Tibial artery (tissue), 4 donors: ENCODE measurements at regions of chr7 and their contacts with region 1.

Region 1: GRCh38 chr7:518630-519483 is 789 bp downstream of the PDGFA start:
- DNase-seq: peak; percentile 80 to 93
- H3K4me3 ChIP-seq: peak overlapping the region; percentile 89 to 96
- H3K27ac ChIP-seq: peak overlapping the region; percentile 96 to 99
- H3K4me1 ChIP-seq: peaks cover 0 to 71% (median 57%) of the 10 kb centered on the region in 4 donors
- H3K27me3 ChIP-seq: no peaks in the 10 kb centered on the region
- CTCF ChIP-seq: peak in 1 of 2 experiments; percentile 35

Region 2: DNA sequence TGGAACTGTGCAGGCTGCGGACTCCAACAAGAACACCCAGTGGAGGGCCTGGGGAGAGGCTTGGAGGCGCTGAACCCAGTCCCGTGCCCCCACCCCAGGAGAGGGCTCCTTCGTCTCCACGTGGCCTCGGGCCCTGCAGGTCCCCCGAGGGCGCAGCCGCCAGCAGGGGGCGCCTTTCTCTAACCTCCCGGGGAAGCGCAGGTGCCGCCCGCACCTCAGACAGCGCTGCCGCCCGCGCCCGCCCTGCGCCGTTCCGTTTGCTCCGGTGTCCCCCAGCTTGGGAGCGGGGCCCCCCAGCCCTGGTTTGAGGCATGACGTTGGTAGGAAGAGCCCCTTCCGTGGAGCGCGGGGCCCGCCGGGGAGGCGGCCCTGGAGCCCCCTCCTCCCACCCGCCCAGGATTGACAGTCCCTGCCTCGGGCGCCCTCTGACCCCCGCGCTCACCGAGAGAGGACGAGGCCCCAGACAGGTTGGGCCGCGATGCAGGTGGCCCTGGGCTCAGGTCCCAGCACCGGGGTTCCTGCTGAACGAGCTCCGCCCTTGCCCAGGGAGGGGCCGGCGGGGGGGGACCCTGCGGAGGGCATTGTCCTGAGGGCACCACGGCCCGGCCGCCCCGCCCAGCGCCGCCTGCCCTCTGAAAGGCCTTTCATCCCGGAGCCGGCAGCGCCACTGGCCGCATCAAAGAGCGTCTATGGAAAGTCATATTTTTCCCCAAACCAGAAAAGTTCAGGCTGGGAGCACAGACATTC is 186.0 kb before region 1 on chr7:
- intact Hi-C with region 1: loop called (anchors 10 kb)
- DNase-seq: peak in 1 of 2 donors; percentile 83
- H3K4me3 ChIP-seq: peak overlapping the region; percentile 37 to 47
- H3K27ac ChIP-seq: peak overlapping the region; percentile 37 to 42
- H3K4me1 ChIP-seq: peaks cover 8 to 18% (median 13%) of the 10 kb centered on the region in 4 donors
- H3K27me3 ChIP-seq: peaks cover 0 to 3% of the 10 kb centered on the region in 2 donors
- CTCF ChIP-seq: peak; percentile 86 to 88

Region 3: GRCh38 chr7:471866-472639 is 46.8 kb before region 1 on chr7:
- intact Hi-C with region 1: loop called (anchors 5 kb)
- DNase-seq: peak; percentile 83 to 98
- H3K4me3 ChIP-seq: no peak overlapping the region
- H3K27ac ChIP-seq: peak overlapping the region; percentile 82 to 88
- H3K4me1 ChIP-seq: peaks cover 4 to 31% (median 28%) of the 10 kb centered on the region in 4 donors
- H3K27me3 ChIP-seq: no peaks in the 10 kb centered on the region
- CTCF ChIP-seq: no peak

Region 4: DNA sequence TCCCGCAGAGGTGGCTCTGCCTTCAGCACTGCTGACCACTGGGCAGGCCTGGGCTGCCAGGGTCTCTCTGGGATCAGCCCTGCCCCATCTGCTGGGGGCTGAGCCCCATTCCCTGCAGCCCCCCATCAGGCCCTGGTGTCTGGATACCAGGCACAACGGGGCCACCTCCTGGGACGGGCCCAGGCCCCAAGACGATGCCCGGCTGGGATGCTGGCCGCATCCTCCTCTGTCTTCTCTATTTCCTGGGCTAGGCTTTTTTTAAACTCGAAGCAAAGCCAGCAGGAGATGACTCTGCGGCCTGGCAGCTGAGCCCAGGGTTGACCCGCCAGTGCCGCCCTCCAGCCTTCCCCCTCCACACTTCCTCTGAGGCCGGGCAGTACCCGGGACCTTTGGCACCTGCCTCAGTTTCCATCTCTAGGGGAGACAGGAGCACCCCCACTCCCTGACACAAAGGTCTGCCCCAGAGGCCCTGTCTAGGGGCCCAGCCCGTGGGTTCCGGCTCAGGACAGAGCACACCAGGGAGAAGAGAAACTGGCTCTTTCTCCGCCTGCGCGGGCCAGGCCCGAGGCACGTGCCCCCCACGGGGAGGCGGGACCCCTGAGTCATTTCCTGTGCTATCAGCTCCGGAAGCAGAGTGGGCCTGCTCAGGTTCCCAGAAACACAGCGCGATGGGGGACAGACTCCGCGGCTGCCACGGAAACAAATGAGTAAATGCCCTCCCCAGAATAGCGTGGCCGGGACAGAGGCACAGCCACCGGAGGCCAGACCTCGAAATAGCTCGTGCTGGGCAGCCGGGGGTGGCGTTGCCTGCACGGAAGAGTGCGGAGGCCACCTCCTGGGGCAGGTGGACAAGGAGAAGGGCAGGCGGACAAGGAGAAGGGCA is 85.4 kb after region 1 on chr7:
- intact Hi-C with region 1: loop called (anchors 5 kb)
- DNase-seq: peak; percentile 88 to 96
- H3K4me3 ChIP-seq: peak overlapping the region; percentile 22 to 34
- H3K27ac ChIP-seq: peak overlapping the region; percentile 89 to 91
- H3K4me1 ChIP-seq: peaks cover 0 to 76% (median 52%) of the 10 kb centered on the region in 4 donors
- H3K27me3 ChIP-seq: no peaks in the 10 kb centered on the region
- CTCF ChIP-seq: no peak

Region 5: GRCh38 chr7:774161-775109 is 255.6 kb after region 1 on chr7:
- intact Hi-C with region 1: loop called (anchors 10 kb)
- DNase-seq: no peak
- H3K4me3 ChIP-seq: no peak overlapping the region
- H3K27ac ChIP-seq: no peak overlapping the region
- H3K4me1 ChIP-seq: peaks cover 0 to 32% (median 25%) of the 10 kb centered on the region in 4 donors
- H3K27me3 ChIP-seq: no peaks in the 10 kb centered on the region
- CTCF ChIP-seq: peak; percentile 87 to 91

Region 6: GRCh38 chr7:867672-868486 is 349.0 kb after region 1 on chr7:
- intact Hi-C with region 1: loop called (anchors 2 kb)
- DNase-seq: peak; percentile 79 to 96
- H3K4me3 ChIP-seq: peak overlapping the region; percentile 10 to 35
- H3K27ac ChIP-seq: peak overlapping the region; percentile 82 to 95
- H3K4me1 ChIP-seq: peaks cover 0 to 43% (median 30%) of the 10 kb centered on the region in 4 donors
- H3K27me3 ChIP-seq: no peaks in the 10 kb centered on the region
- CTCF ChIP-seq: peak; percentile 15

Region 7: DNA sequence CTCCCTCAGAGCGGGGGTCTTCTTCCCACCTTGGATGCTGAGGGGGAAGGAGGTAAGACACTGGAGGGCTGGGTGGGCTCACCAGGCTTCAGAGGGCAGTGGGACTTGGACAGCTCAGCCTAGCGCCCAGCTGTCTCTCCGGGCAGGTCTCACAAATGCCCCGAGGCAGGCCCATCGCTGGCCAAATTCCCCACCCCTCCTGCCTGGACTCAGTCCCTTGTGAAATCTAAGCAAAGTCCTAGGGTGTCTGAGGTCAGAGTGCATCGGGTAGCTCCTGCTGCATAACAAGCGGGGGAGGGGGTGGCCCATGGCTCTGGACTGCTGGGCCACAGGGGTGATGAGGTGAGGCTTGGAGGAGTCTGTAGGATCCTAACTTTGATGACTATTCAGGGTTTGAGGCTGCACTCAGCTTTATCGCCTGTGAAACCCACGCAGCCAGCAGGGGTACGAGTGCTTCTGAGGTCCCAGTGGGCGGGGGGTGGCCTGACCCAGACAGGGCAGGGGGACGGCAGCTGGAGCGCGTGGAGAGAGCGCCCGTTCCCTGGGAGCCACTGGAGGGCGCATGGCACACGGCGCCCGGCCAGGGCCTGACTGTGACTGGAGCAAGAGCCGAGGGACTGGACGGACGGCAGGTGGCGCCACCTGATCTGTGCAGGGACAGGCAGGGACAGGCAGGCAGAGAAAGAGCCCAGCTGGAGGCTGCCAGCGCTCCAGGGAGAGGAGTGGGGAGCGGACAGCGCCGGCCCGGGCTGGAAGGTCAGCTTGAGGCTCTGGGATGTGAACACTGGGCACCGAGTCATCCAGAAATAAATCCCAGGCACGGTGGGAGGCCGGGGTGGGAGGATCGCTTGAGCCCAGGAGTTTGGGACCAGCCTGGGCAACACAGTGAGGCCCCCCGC is 474.1 kb after region 1 on chr7:
- intact Hi-C with region 1: no loop called
- DNase-seq: peak; percentile 96 to 97
- H3K4me3 ChIP-seq: no peak overlapping the region
- H3K27ac ChIP-seq: no peak overlapping the region
- H3K4me1 ChIP-seq: peaks cover 0 to 22% (median 5%) of the 10 kb centered on the region in 4 donors
- H3K27me3 ChIP-seq: peaks cover 0 to 42% of the 10 kb centered on the region in 2 donors
- CTCF ChIP-seq: peak; percentile 99 to 100